Activated naive CD4-positive, alpha-beta T cell treated with anti-CD3 and anti-CD28 coated beads for 36 hours (primary cell): ENCODE measurements at regions of chr19 and their contacts with region 1.

Region 1: DNA sequence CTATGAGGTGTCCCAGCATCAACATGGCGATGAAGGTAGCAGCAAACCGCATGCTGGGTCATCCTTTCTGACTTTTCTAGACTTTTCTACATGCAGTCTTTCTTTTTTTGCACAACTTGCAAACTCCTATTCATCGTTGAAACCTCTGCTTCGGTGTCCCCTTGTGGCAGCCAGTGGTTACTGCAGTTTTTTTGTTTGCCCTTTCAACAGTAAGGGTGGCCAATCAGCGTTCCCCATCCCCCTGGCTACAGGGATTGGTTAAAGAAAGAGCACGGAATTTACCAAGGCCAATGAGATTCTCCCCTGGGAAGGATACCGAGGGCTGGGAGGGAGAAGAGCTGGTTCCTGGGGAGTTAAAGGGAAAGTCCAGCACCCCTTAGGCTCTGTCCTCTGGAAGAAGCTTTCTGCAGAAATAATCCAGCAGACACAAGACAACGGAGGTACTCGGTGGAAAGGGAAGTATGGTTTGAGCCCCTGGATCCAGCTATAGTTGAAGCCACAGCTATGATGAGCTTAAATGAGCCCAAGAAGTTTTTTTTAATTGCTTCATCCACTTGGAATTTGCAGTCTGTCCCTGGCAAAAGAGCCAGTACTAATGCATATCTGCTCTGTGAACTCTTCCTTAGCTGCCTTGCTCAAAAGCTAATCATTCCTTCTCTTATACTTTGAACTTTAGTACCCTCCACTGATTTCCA is 5.6 kb upstream of the LSM4 start:
- DNase-seq: peak; percentile 96
- H3K4me3 Mint-ChIP-seq: peak overlapping the region; percentile 68
- H3K27ac Mint-ChIP-seq: no peak overlapping the region
- H3K4me1 Mint-ChIP-seq: peaks cover 21% of the 10 kb centered on the region
- H3K27me3 Mint-ChIP-seq: no peaks in the 10 kb centered on the region

Region 2: DNA sequence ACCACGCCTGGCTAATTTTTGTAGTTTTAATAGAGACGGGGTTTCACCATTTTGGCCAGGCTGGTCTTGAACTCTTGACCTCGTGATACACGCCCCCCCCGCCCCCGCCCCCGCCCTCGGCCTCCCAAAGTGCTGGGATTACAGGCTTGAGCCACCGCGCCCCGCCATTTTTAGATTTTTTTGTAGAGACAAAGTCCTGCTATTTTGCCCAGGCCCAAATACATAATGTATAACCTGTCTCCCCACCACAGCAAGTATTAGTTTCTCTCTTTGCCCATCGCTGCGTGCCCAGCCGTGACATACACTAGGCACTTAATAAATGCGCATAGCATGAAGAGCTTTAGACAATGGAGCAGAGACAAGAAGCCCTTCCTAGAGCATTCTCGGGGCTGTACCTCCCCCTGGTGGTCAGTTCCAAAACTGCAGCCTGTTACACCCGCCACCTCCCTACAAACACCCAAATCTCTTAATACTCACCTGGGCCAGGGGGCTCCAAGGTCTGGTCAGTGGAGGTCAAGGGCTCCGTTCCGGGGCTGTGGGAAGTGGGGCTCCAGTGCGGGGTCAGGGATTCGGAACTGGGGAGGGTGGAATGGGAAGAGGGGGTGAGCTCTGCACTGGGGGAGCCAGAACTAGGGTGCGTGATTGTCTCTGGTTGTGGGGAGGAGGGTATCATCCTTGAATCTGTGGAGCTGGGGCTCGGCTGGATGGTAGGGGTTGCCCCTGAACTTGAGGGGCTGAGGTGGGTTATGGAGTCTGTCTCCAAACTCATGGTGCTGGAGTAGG is 76.7 kb before region 1 on chr19:
- CTCF ChIA-PET with region 1: interaction called, 31 read pairs
- intact Hi-C with region 1: no loop called
- DNase-seq: peak; percentile 90
- H3K4me3 Mint-ChIP-seq: no peak overlapping the region
- H3K27ac Mint-ChIP-seq: no peak overlapping the region
- H3K4me1 Mint-ChIP-seq: peaks cover 2% of the 10 kb centered on the region
- H3K27me3 Mint-ChIP-seq: peaks cover 23% of the 10 kb centered on the region

Region 3: GRCh38 chr19:18274781-18275356 is 53.6 kb before region 1 on chr19:
- CTCF ChIA-PET with region 1: interaction called, 240 read pairs
- intact Hi-C with region 1: loop called (anchors 1 kb)
- DNase-seq: no peak
- H3K4me3 Mint-ChIP-seq: no peak overlapping the region
- H3K27ac Mint-ChIP-seq: no peak overlapping the region
- H3K4me1 Mint-ChIP-seq: peaks cover 36% of the 10 kb centered on the region
- H3K27me3 Mint-ChIP-seq: no peaks in the 10 kb centered on the region

Region 4: DNA sequence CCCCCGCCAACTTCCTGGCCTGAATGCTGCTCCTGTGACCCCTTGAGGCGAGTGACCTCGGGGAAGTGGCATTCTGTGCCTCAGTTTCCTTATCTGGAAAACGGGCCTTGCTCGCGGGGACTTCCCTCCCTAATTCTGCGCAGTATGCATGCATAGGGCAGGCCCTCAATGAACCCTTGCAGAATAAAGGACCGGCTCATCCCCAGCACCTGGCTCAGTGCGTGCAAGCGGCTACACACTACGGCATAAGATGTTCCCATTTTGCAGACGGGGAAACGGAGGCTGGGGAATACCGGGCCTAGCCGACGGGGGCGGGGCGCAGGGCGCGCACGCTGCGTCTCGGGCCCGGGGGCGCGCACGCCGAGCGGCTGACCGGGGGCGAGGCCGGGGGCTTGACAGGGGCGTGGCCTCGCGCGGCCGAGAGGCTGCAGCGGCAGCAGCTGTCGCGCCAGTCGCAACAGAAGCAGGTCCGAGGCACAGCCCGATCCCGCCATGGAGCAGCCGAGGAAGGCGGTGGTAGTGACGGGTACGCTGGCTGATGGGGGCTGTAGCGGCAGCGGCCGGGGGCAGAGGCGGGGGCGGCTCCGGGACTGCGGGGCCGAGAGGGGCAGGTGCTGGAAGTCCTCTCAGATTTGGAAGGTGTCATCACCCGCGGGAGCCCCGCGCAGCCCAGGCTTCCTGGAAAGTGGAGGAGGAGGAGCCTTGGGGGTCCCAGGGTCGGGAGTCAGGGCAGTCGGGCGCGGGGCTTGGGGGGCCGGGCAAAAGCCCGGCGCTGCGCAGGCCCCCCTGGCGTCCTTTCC is 11.9 kb after region 1 on chr19 and contains the start of gene PGPEP1:
- CTCF ChIA-PET with region 1: interaction called, 15 read pairs
- intact Hi-C with region 1: no loop called
- DNase-seq: peak; percentile 54
- H3K4me3 Mint-ChIP-seq: peak within 1 kb of the TSS; percentile 77
- H3K27ac Mint-ChIP-seq: peak within 1 kb of the TSS; percentile 73
- H3K4me1 Mint-ChIP-seq: peaks cover 15% of the 10 kb centered on the region
- H3K27me3 Mint-ChIP-seq: no peaks in the 10 kb centered on the region
- total RNA-seq, gene PGPEP1: 14.4 to 15.6 TPM

Region 5: DNA sequence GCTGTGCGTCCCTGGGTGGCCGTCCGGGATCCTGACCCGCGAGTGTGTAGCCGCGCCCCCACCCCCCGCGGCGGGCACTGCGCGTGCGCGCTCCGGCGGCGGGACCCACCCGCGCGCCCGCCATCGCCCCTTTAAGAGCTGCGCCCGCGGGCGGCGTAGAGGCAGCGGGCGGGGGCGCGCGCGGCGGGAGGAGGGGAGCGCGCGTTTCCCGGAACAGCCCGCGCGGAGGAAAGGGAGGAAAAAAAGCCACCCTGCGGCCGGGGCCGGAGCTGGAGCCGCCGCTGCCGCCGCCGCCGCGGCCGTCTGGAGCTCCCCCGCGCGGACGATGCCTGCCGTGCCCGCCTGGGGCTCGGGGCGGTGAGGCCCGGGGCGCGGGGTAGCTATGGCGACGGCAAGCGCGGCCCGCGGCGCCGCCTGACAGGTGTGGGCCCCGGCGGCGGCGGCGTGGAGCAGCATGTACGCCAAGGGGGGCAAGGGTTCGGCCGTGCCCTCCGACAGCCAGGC is 90.8 kb after region 1 on chr19 and contains the start of gene SSBP4:
- CTCF ChIA-PET with region 1: interaction called, 3 read pairs
- intact Hi-C with region 1: loop called (anchors 5 kb)
- DNase-seq: peak; percentile 64
- H3K4me3 Mint-ChIP-seq: peak within 1 kb of the TSS; percentile 82
- H3K27ac Mint-ChIP-seq: peak within 1 kb of the TSS; percentile 56
- H3K4me1 Mint-ChIP-seq: peaks cover 73% of the 10 kb centered on the region
- H3K27me3 Mint-ChIP-seq: peaks cover 32% of the 10 kb centered on the region
- total RNA-seq, gene SSBP4: 62.6 to 71.4 TPM

Region 6: GRCh38 chr19:18603255-18603957 is 274.9 kb after region 1 on chr19:
- CTCF ChIA-PET with region 1: no interaction called
- intact Hi-C with region 1: no loop called
- DNase-seq: peak; percentile 29
- H3K4me3 Mint-ChIP-seq: no peak overlapping the region
- H3K27ac Mint-ChIP-seq: no peak overlapping the region
- H3K4me1 Mint-ChIP-seq: peaks cover 9% of the 10 kb centered on the region
- H3K27me3 Mint-ChIP-seq: peaks cover 49% of the 10 kb centered on the region